ENCODE measurements at regions of chr12 and their contacts with region 1.

Region 1: GRCh38 chr12:47247433-47247832 is 167.7 kb upstream of the AMIGO2 start:
- DNase-seq: peak; percentile 91
- ATAC-seq: peak; percentile 61
- H3K4me3 ChIP-seq: no peak overlapping the region
- H3K27ac ChIP-seq: peak overlapping the region; percentile 82
- H3K4me1 ChIP-seq: peaks cover 58% of the 10 kb centered on the region
- H3K27me3 ChIP-seq: no peaks in the 10 kb centered on the region
- CTCF ChIP-seq: no peak

Region 2: GRCh38 chr12:46065412-46066166 is 1181.8 kb before region 1 on chr12:
- CTCF ChIA-PET with region 1: no interaction called
- POLR2A ChIA-PET with region 1: no interaction called
- intact Hi-C with region 1: no loop called
- DNase-seq: no peak
- ATAC-seq: no peak
- H3K4me3 ChIP-seq: no peak overlapping the region
- H3K27ac ChIP-seq: no peak overlapping the region
- H3K4me1 ChIP-seq: no peaks in the 10 kb centered on the region
- H3K27me3 ChIP-seq: no peaks in the 10 kb centered on the region
- CTCF ChIP-seq: no peak

Region 3: GRCh38 chr12:47205532-47206449 is 41.6 kb before region 1 on chr12:
- CTCF ChIA-PET with region 1: no interaction called
- POLR2A ChIA-PET with region 1: no interaction called
- intact Hi-C with region 1: no loop called
- DNase-seq: no peak
- ATAC-seq: no peak
- H3K4me3 ChIP-seq: no peak overlapping the region
- H3K27ac ChIP-seq: no peak overlapping the region
- H3K4me1 ChIP-seq: peaks cover 12% of the 10 kb centered on the region; the same call in 1 of the 2 replicates
- H3K27me3 ChIP-seq: no peaks in the 10 kb centered on the region
- CTCF ChIP-seq: no peak

Region 4: DNA sequence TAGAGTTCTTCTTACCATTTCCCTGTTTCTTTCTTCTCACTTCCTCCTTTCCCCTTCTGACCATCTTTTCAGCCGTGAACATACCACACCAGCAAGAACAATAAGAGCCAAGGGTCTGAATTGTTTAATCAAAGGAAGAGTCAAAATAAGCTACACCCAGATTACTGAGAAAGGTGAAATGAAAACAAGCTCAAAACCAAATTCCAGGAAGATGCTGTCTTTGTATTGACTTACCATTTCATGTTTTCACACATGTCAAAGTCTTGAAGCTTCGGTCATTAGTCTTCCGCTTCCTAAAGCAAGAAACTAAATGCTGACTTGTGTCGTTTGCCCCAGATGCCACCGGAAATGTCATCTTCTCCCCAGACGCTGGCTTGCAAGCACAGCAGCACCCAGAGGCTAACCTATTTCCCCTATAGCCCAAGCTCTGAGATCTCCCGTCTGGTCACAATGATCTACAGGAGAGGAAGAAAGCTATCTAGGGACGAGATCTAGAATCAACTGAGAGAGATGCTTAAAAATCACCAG is 31.2 kb before region 1 on chr12:
- CTCF ChIA-PET with region 1: no interaction called
- POLR2A ChIA-PET with region 1: no interaction called
- intact Hi-C with region 1: loop called (anchors 2 kb)
- DNase-seq: no peak
- ATAC-seq: no peak
- H3K4me3 ChIP-seq: no peak overlapping the region
- H3K27ac ChIP-seq: no peak overlapping the region; the same call in 1 of the 2 replicates
- H3K4me1 ChIP-seq: peaks cover 44% of the 10 kb centered on the region
- H3K27me3 ChIP-seq: no peaks in the 10 kb centered on the region
- CTCF ChIP-seq: no peak

Region 5: DNA sequence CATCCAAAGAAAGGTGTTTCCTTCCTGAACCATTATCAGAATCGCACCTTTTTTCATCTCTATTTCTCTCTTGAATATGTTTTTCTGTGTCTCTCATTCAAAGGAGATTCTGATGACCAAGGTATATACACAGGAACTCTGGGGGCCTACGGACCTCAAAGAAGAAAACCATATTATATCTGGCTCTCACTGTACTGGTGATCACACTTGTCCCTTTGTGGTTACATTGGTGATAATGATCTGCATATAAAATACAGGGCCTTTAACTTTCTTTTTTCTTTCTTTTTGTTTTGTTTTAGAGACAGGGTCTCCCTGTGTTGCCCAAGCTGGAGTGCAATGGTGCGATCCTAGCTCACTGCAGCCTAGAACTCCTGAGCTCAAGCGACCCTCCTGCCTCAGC is 17.5 kb after region 1 on chr12:
- CTCF ChIA-PET with region 1: no interaction called
- POLR2A ChIA-PET with region 1: no interaction called
- intact Hi-C with region 1: loop called (anchors 1 kb)
- DNase-seq: no peak
- ATAC-seq: no peak
- H3K4me3 ChIP-seq: no peak overlapping the region
- H3K27ac ChIP-seq: no peak overlapping the region
- H3K4me1 ChIP-seq: peaks cover 27% of the 10 kb centered on the region
- H3K27me3 ChIP-seq: no peaks in the 10 kb centered on the region
- CTCF ChIP-seq: no peak

Region 6: GRCh38 chr12:47307680-47308399 is 60.4 kb after region 1 on chr12:
- CTCF ChIA-PET with region 1: no interaction called
- POLR2A ChIA-PET with region 1: no interaction called
- intact Hi-C with region 1: loop called (anchors 5 kb)
- DNase-seq: peak; percentile 84
- ATAC-seq: peak; percentile 100
- H3K4me3 ChIP-seq: no peak overlapping the region
- H3K27ac ChIP-seq: no peak overlapping the region
- H3K4me1 ChIP-seq: peaks cover 8% of the 10 kb centered on the region; the same call in 1 of the 2 replicates
- H3K27me3 ChIP-seq: no peaks in the 10 kb centered on the region
- CTCF ChIP-seq: peak; percentile 94

Region 7: DNA sequence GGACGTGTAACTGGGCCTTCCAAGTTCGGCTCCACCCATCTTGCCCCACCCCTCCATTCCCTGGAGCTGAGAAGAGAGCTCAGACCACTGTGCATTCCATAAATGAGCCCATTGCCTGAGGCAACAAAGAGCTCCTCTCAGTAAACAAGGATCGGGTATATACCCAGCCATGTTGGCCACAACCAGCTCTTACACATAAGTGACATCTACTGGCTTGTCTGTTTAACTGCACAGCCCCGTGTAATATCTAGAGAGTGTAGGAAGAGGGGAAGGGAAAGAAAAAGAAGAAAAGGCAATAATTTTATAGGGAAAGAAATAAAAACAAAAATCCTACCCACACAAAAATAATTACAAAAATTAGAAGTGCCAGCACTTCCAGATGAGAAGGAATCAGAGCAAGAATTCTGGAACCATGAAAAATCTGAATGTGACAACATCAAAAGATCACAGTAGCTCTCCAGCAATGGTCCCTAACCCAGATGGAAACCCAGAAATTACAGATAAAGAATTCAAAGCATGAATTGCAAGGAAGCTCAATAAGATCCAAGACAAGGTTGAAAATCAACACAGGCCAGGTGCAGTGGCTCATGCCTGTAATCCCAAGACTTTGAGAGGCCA is 150.3 kb after region 1 on chr12:
- CTCF ChIA-PET with region 1: no interaction called
- POLR2A ChIA-PET with region 1: interaction called, 13 read pairs
- intact Hi-C with region 1: loop called (anchors 5 kb)
- DNase-seq: peak; percentile 94
- ATAC-seq: peak; percentile 88
- H3K4me3 ChIP-seq: no peak overlapping the region
- H3K27ac ChIP-seq: no peak overlapping the region
- H3K4me1 ChIP-seq: peaks cover 25% of the 10 kb centered on the region
- H3K27me3 ChIP-seq: no peaks in the 10 kb centered on the region
- CTCF ChIP-seq: peak; percentile 93

Measured in PC-3 (cell line).